B cell (primary cell): ENCODE measurements at regions of chr13 and their contacts with region 1.

Region 1: GRCh38 chr13:44274452-44275205 is 99.0 kb upstream of the SERP2 start:
- DNase-seq: peak; percentile 82
- ATAC-seq: peak; percentile 84
- H3K4me3 ChIP-seq: peak overlapping the region in 3 of 5 experiments; percentile 31 to 38 (median 35)
- H3K4me3 Mint-ChIP-seq: peak overlapping the region; percentile 65
- H3K27ac ChIP-seq: peak overlapping the region; percentile 74 to 83
- H3K27ac Mint-ChIP-seq: peak overlapping the region; percentile 85
- H3K4me1 ChIP-seq: peaks cover 29 to 44% of the 10 kb centered on the region in 2 donors
- H3K4me1 Mint-ChIP-seq: peaks cover 40% of the 10 kb centered on the region
- H3K27me3 ChIP-seq: no peaks in the 10 kb centered on the region
- H3K27me3 Mint-ChIP-seq: no peaks in the 10 kb centered on the region
- CTCF ChIP-seq: no peak

Region 2: GRCh38 chr13:44231786-44232516 is 42.7 kb before region 1 on chr13:
- CTCF ChIA-PET with region 1: no interaction called
- POLR2A ChIA-PET with region 1: interaction called, 10 read pairs
- intact Hi-C with region 1: no loop called
- DNase-seq: no peak
- ATAC-seq: no peak
- H3K4me3 ChIP-seq: no peak overlapping the region
- H3K4me3 Mint-ChIP-seq: no peak overlapping the region
- H3K27ac ChIP-seq: no peak overlapping the region
- H3K27ac Mint-ChIP-seq: no peak overlapping the region
- H3K4me1 ChIP-seq: no peaks in the 10 kb centered on the region
- H3K4me1 Mint-ChIP-seq: no peaks in the 10 kb centered on the region
- H3K27me3 ChIP-seq: peaks cover 0 to 13% (median 5%) of the 10 kb centered on the region in 4 experiments
- H3K27me3 Mint-ChIP-seq: peaks cover 7% of the 10 kb centered on the region
- CTCF ChIP-seq: no peak

Region 3: GRCh38 chr13:44629465-44630183 is 355.0 kb after region 1 on chr13:
- CTCF ChIA-PET with region 1: no interaction called
- POLR2A ChIA-PET with region 1: no interaction called
- intact Hi-C with region 1: no loop called
- DNase-seq: no peak
- ATAC-seq: no peak
- H3K4me3 ChIP-seq: no peak overlapping the region
- H3K4me3 Mint-ChIP-seq: no peak overlapping the region
- H3K27ac ChIP-seq: no peak overlapping the region
- H3K27ac Mint-ChIP-seq: no peak overlapping the region
- H3K4me1 ChIP-seq: no peaks in the 10 kb centered on the region
- H3K4me1 Mint-ChIP-seq: no peaks in the 10 kb centered on the region
- H3K27me3 ChIP-seq: peaks cover 0 to 2% (median 0%) of the 10 kb centered on the region in 4 experiments
- H3K27me3 Mint-ChIP-seq: peaks cover 21% of the 10 kb centered on the region
- CTCF ChIP-seq: no peak